ENCODE measurements at regions of chr18 and their contacts with region 1.

Region 1: GRCh38 chr18:23924813-23925212 is 89.7 kb upstream of the TTC39C start:
- DNase-seq: no peak

Region 2: DNA sequence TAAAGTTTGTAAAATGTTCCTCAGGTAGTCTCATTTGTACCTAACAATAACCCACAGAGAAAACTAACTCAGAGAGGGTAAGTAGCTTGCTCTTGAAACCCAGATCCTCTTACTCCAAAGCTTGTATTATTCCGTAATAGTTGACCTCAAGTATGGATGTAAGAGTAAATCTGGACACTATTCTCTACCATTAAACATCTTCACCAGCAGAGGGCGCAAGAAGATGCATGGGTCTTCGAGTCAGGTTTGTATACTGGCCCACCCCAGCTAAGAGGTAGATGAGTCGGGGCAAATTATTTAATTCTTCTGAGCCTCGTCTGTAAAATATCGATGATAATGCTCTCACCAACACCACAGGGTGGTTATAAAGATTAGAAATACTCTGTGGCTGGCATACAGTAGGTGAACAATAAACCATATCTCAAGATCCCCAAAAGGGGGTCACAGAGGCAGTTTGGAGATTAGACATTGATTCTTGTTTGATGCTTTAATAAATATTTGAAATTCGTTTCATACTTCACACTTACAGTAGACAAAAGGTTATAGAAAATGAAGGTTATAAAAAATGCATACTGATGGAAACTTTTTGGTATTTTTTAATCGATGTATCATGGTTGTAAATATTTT is 793.0 kb before region 1 on chr18:
- intact Hi-C with region 1: no loop called
- DNase-seq: peak; percentile 26

Region 3: GRCh38 chr18:23189768-23190661 is 734.8 kb before region 1 on chr18:
- intact Hi-C with region 1: loop called in 1 of 2 experiments (anchors 5 kb)
- DNase-seq: no peak

Region 4: DNA sequence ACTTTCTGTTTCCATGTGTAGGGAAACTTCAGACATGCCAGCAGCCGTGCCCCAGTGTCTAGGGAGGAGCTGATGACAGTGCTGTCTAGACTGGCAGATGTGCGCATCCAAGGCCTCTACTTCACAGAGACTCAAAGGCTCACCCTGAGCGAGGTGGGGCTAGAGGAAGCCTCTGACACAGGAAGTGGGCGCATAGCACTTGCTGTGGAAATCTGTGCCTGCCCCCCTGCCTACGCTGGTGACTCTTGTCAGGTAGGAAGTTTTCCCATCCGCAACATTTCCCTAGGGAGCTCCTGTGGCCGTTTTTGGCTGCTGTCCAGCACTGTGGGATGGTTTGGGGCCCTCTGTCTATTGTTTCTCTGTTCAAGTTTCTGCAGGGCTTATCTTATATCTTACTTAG is 53.4 kb before region 1 on chr18:
- intact Hi-C with region 1: no loop called
- DNase-seq: no peak

Region 5: DNA sequence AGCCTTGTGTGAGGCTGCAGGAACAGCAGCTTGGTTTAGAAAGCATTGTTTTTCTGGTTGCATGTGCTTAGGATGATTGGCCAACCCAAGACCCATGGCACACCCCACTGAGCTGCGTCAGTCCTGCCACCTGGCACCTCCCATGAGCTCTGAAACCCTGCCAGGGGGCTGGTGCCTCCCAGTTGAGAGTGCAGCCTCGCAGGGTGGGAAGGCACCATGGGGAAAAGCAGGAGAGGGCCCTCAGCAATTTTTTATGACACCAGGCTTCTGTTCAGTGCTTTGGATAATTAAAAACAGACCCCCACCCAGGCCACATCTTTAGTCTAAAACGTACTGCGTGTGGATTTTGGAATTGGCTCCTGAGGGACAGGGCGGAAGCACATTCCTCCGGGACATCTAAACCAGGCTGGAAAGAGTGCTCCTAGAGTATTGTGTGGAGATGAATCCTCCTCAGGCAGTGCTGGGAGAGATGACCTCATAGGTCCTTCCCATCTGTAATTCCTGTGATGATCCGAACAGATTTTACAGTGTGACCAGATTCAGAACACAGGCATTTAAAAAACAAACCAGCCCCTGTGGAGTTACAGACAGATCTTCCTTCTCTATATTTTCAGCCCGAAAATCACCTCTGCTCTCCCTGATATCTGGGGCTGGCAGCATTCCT is 988.8 kb after region 1 on chr18:
- intact Hi-C with region 1: no loop called
- DNase-seq: no peak